Activated CD8-positive, alpha-beta T cell treated with anti-CD3 and anti-CD28 coated beads, Interleukin-2, amount 10 ng/mL, durations not matched to agents 7 days and 5 days (primary cell): ENCODE measurements at regions of chr1 and their contacts with region 1.

Region 1: GRCh38 chr1:21344750-21345443 is 54.6 kb upstream of the ECE1 start:
- DNase-seq: peak; percentile 42
- ATAC-seq: peak; percentile 41
- H3K4me3 Mint-ChIP-seq: peak overlapping the region; percentile 87
- H3K27ac Mint-ChIP-seq: peak overlapping the region; percentile 91
- H3K4me1 Mint-ChIP-seq: peaks cover 42% of the 10 kb centered on the region
- H3K27me3 Mint-ChIP-seq: no peaks in the 10 kb centered on the region

Region 2: GRCh38 chr1:21302747-21303715 is 41.9 kb before region 1 on chr1:
- CTCF ChIA-PET with region 1: no interaction called
- POLR2A ChIA-PET with region 1: interaction called, 11 read pairs
- DNase-seq: no peak
- ATAC-seq: no peak
- H3K4me3 Mint-ChIP-seq: no peak overlapping the region
- H3K27ac Mint-ChIP-seq: no peak overlapping the region
- H3K4me1 Mint-ChIP-seq: peaks cover 55% of the 10 kb centered on the region
- H3K27me3 Mint-ChIP-seq: no peaks in the 10 kb centered on the region

Region 3: DNA sequence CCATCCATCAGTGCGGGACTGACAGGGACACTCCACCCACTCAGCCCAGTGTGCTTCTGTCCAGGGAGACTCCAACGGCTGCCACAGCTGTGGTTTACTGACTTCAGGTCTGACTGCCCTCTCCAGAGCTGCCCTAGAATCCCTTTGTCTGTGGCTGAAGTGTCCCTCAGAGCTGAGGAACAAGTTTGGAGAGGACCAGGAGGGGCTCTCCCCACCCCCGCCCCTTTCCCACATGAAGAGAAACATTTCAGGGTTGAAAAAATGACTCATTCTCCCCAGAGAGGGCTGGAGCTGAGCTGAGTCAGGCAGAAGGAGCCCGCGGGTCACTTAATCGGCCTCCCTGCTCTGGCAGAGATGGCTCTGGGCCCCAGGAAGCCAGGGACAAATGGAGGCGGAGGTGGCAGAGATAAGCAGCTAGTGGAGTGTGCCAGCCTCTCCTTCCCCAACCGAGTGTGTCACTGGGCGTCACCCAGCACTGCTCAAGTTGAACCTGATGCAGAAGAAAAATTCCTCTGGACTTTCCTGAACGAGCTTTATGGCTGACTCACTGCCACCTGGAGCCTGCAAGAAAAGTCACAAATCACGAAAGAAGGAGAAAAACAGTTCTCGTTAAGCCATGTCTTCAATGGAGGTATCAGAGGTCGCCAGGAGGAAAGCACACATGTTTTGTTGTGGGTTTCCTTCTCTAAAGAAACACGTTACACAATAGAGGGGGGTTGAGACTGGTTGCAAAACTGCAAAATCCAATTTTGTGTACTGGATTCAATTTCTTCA is 20.3 kb before region 1 on chr1:
- CTCF ChIA-PET with region 1: interaction called, 4 read pairs
- POLR2A ChIA-PET with region 1: interaction called, 20 read pairs
- DNase-seq: peak; percentile 61
- ATAC-seq: peak; percentile 72
- H3K4me3 Mint-ChIP-seq: peak overlapping the region; percentile 42
- H3K27ac Mint-ChIP-seq: peak overlapping the region; percentile 75
- H3K4me1 Mint-ChIP-seq: peaks cover 70% of the 10 kb centered on the region
- H3K27me3 Mint-ChIP-seq: no peaks in the 10 kb centered on the region

Region 4: GRCh38 chr1:21334214-21335087 is 10.4 kb before region 1 on chr1:
- CTCF ChIA-PET with region 1: interaction called, 8 read pairs
- POLR2A ChIA-PET with region 1: interaction called, 31 read pairs
- DNase-seq: peak; percentile 92
- ATAC-seq: peak; percentile 92
- H3K4me3 Mint-ChIP-seq: peak overlapping the region; percentile 75
- H3K27ac Mint-ChIP-seq: peak overlapping the region; percentile 89
- H3K4me1 Mint-ChIP-seq: peaks cover 86% of the 10 kb centered on the region
- H3K27me3 Mint-ChIP-seq: no peaks in the 10 kb centered on the region